PC-3 (cell line): ENCODE measurements at regions of chr1 and their contacts with region 1.

Region 1: GRCh38 chr1:70509996-70510876 is 99.2 kb downstream of the CTH start:
- DNase-seq: peak; percentile 96
- ATAC-seq: peak; percentile 91
- H3K4me3 ChIP-seq: peak overlapping the region; percentile 45; the same call in 1 of the 2 replicates
- H3K27ac ChIP-seq: peak overlapping the region; percentile 38
- H3K4me1 ChIP-seq: peaks cover 6% of the 10 kb centered on the region
- H3K27me3 ChIP-seq: no peaks in the 10 kb centered on the region
- CTCF ChIP-seq: peak; percentile 83

Region 2: GRCh38 chr1:70034403-70034802 is 475.8 kb before region 1 on chr1:
- CTCF ChIA-PET with region 1: no interaction called
- POLR2A ChIA-PET with region 1: no interaction called
- intact Hi-C with region 1: loop called (anchors 1 kb)
- DNase-seq: peak; percentile 84
- ATAC-seq: peak; percentile 97
- H3K4me3 ChIP-seq: no peak overlapping the region
- H3K27ac ChIP-seq: no peak overlapping the region
- H3K4me1 ChIP-seq: no peaks in the 10 kb centered on the region; the same call in 1 of the 2 replicates
- H3K27me3 ChIP-seq: peaks cover 10% of the 10 kb centered on the region; the same call in 1 of the 2 replicates
- CTCF ChIP-seq: peak; percentile 76

Region 3: GRCh38 chr1:70134148-70134547 is 376.1 kb before region 1 on chr1:
- CTCF ChIA-PET with region 1: no interaction called
- POLR2A ChIA-PET with region 1: no interaction called
- intact Hi-C with region 1: loop called (anchors 1 kb)
- DNase-seq: peak; percentile 7
- ATAC-seq: no peak
- H3K4me3 ChIP-seq: no peak overlapping the region
- H3K27ac ChIP-seq: no peak overlapping the region
- H3K4me1 ChIP-seq: no peaks in the 10 kb centered on the region
- H3K27me3 ChIP-seq: no peaks in the 10 kb centered on the region
- CTCF ChIP-seq: no peak

Region 4: DNA sequence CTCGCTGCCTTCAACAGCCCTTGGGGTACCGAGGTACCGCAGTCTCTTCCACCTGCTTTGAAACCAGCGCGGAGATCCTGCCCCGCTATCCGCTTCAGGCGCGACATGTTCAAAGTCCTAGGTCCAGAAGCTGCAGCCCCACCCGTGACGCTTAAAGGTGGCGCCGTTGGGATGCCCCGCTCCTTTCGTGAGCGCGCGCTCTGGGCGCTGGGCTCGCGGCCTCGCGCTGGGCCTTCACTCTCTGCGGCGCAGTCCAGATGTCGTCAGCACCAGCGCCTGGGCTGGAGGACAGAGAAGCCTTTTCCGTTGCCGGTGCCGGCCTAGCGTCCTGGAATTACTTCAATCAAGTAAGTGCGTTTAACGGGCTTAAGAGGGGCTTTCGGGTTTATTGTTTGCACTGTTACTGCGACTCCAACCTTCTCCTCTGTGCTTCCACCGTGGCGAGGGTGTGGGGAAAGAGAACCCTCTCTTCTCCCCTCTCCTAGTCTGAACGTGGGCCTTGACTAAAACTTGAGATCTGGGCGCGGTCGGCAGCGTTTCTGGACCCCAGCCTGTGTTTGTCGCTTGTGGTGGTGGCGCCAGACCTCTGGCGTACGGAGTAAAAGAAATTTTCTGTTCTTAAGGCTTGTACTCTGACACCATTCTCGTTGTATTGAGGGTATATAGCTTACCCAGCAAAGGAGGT is 304.7 kb before region 1 on chr1 and contains the start of gene LRRC40:
- CTCF ChIA-PET with region 1: no interaction called
- POLR2A ChIA-PET with region 1: no interaction called
- intact Hi-C with region 1: loop called (anchors 1 kb)
- DNase-seq: peak; percentile 98
- ATAC-seq: peak; percentile 85
- H3K4me3 ChIP-seq: peak within 1 kb of the TSS; percentile 85
- H3K27ac ChIP-seq: peak within 1 kb of the TSS; percentile 75
- H3K4me1 ChIP-seq: peaks cover 12% of the 10 kb centered on the region
- H3K27me3 ChIP-seq: no peaks in the 10 kb centered on the region
- CTCF ChIP-seq: 0 out of 2 replicates have a peak, but pooled peaks have one; percentile 25
- total RNA-seq, gene LRRC40: 17.9 and 18.4 TPM in 2 replicates

Region 5: GRCh38 chr1:70247768-70248167 is 262.5 kb before region 1 on chr1:
- CTCF ChIA-PET with region 1: no interaction called
- POLR2A ChIA-PET with region 1: no interaction called
- intact Hi-C with region 1: loop called (anchors 2 kb)
- DNase-seq: peak; percentile 22
- ATAC-seq: peak; percentile 79
- H3K4me3 ChIP-seq: no peak overlapping the region
- H3K27ac ChIP-seq: no peak overlapping the region
- H3K4me1 ChIP-seq: no peaks in the 10 kb centered on the region
- H3K27me3 ChIP-seq: no peaks in the 10 kb centered on the region
- CTCF ChIP-seq: no peak

Region 6: GRCh38 chr1:70331962-70332361 is 178.3 kb before region 1 on chr1:
- CTCF ChIA-PET with region 1: no interaction called
- POLR2A ChIA-PET with region 1: no interaction called
- intact Hi-C with region 1: loop called (anchors 5 kb)
- DNase-seq: peak; percentile 76
- ATAC-seq: peak; percentile 89
- H3K4me3 ChIP-seq: no peak overlapping the region
- H3K27ac ChIP-seq: peak overlapping the region; percentile 48
- H3K4me1 ChIP-seq: peaks cover 50% of the 10 kb centered on the region
- H3K27me3 ChIP-seq: no peaks in the 10 kb centered on the region
- CTCF ChIP-seq: no peak

Region 7: GRCh38 chr1:70436622-70437251 is 73.5 kb before region 1 on chr1:
- CTCF ChIA-PET with region 1: no interaction called
- POLR2A ChIA-PET with region 1: no interaction called
- intact Hi-C with region 1: loop called (anchors 1 kb)
- DNase-seq: peak; percentile 18
- ATAC-seq: no peak
- H3K4me3 ChIP-seq: no peak overlapping the region
- H3K27ac ChIP-seq: no peak overlapping the region
- H3K4me1 ChIP-seq: no peaks in the 10 kb centered on the region
- H3K27me3 ChIP-seq: no peaks in the 10 kb centered on the region
- CTCF ChIP-seq: peak; percentile 50